ENCODE measurements at regions of chr2 and their contacts with region 1.

Region 1: GRCh38 chr2:206159346-206160124 is at the starts of genes EEF1B2 and NDUFS1:
- H3K4me3 Mint-ChIP-seq: peak within 1 kb of the TSS; percentile 97
- H3K27ac Mint-ChIP-seq: peak within 1 kb of the TSS; percentile 94
- H3K4me1 Mint-ChIP-seq: peaks cover 40% of the 10 kb centered on the region
- H3K27me3 Mint-ChIP-seq: no peaks in the 10 kb centered on the region

Region 2: GRCh38 chr2:206085742-206086445 is 73.6 kb before region 1 on chr2 and contains the start of gene INO80D:
- intact Hi-C with region 1: loop called (anchors 1 kb)
- H3K4me3 Mint-ChIP-seq: peak within 1 kb of the TSS; percentile 99
- H3K27ac Mint-ChIP-seq: peak within 1 kb of the TSS; percentile 99
- H3K4me1 Mint-ChIP-seq: peaks cover 16% of the 10 kb centered on the region
- H3K27me3 Mint-ChIP-seq: no peaks in the 10 kb centered on the region

Region 3: GRCh38 chr2:206112846-206113547 is 46.5 kb before region 1 on chr2:
- intact Hi-C with region 1: no loop called
- H3K4me3 Mint-ChIP-seq: no peak overlapping the region
- H3K27ac Mint-ChIP-seq: no peak overlapping the region
- H3K4me1 Mint-ChIP-seq: no peaks in the 10 kb centered on the region
- H3K27me3 Mint-ChIP-seq: no peaks in the 10 kb centered on the region

Region 4: GRCh38 chr2:206260188-206261012 is 100.9 kb after region 1 on chr2:
- intact Hi-C with region 1: loop called (anchors 5 kb)
- H3K4me3 Mint-ChIP-seq: no peak overlapping the region
- H3K27ac Mint-ChIP-seq: no peak overlapping the region
- H3K4me1 Mint-ChIP-seq: peaks cover 6% of the 10 kb centered on the region
- H3K27me3 Mint-ChIP-seq: peaks cover 79% of the 10 kb centered on the region

Region 5: DNA sequence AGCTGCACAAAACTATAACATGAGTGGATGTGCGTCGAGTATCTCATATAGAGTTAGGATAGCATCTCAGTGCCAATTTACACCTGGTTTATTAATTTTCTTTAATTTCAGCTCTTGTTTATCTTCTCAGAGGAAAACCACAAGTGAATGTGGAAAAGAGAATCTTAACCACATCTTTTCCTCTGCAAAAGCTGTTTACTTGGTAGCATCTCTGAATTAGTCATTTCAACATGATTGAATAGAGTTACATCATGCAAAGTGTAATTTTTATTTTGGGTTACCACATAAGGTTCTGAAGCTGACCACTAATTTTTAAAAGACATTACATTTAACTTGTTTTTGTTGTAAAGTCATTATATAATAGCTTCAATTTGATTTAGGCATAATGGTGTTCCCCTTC is 399.0 kb after region 1 on chr2:
- intact Hi-C with region 1: loop called (anchors 2 kb)
- H3K4me3 Mint-ChIP-seq: no peak overlapping the region
- H3K27ac Mint-ChIP-seq: no peak overlapping the region
- H3K4me1 Mint-ChIP-seq: no peaks in the 10 kb centered on the region
- H3K27me3 Mint-ChIP-seq: peaks cover 5% of the 10 kb centered on the region

Measured in dendritic cell treated with granulocyte-macrophage colony-stimulating factor and Interleukin-4, amounts not matched to agents 40 ng/mL and 50 ng/mL, for 4 days (primary cell).